CD14-positive monocyte (primary cell): ENCODE measurements at regions of chr4 and their contacts with region 1.

Region 1: DNA sequence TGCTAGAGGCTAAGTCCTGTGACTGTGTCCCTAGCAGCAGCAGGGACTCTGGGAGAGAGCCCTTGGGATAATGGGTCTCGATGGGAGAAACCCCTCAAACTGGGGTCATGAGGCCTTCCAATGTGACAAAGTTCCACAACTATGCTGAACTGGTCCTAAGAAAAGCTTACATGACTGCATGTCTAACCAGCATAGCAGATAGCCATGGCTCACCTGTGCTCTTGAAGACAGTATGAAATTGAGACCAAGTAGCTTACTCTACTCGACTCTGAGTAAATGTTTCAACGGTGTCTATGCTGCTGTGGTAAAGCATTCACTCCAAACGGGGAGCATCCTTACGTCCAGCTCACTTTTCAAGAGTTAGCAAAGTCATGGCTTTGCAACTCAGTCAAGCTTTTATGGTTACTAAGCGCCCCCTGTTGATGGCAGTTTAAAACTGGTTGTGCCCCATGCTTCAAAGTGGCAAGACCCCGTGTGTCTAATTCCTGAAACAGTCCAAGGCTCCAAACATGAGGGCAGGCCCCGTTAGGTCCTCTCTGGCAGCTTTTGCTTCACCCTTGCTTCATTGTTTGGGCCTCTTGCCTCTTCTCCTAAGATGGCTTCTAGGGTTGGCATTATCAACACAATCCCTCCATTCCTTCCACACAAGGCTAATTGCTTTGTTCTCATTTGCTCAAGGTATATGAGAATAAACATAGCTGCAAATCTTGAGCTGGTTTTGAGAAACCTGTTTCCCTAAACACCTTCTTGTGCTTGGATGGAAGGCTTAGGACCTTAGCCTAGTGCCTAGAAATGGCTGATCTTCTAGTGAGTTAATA is 46.6 kb downstream of the CCNG2 start:
- DNase-seq: peak; percentile 35 to 73 (median 70)
- H3K4me3 ChIP-seq: no peak overlapping the region
- H3K4me3 Mint-ChIP-seq: no peak overlapping the region
- H3K27ac ChIP-seq: no peak overlapping the region
- H3K27ac Mint-ChIP-seq: no peak overlapping the region
- H3K4me1 ChIP-seq: no peaks in the 10 kb centered on the region
- H3K4me1 Mint-ChIP-seq: peaks cover 2% of the 10 kb centered on the region
- H3K27me3 ChIP-seq: no peaks in the 10 kb centered on the region
- H3K27me3 Mint-ChIP-seq: peaks cover 0 to 2% (median 0%) of the 10 kb centered on the region in 3 donors
- CTCF ChIP-seq: peak; percentile 84

Region 2: GRCh38 chr4:77044461-77045150 is 159.0 kb before region 1 on chr4:
- intact Hi-C with region 1: loop called in 1 of 2 experiments (anchors 5 kb)
- DNase-seq: peak in 1 of 3 donors; percentile 5
- H3K4me3 ChIP-seq: no peak overlapping the region
- H3K4me3 Mint-ChIP-seq: no peak overlapping the region
- H3K27ac ChIP-seq: peak overlapping the region in 1 of 2 donors; percentile 22
- H3K27ac Mint-ChIP-seq: peak overlapping the region in 3 of 7 donors; percentile 6 to 68 (median 33)
- H3K4me1 ChIP-seq: peaks cover 18 to 21% of the 10 kb centered on the region in 2 donors
- H3K4me1 Mint-ChIP-seq: peaks cover 19% of the 10 kb centered on the region
- H3K27me3 ChIP-seq: no peaks in the 10 kb centered on the region
- H3K27me3 Mint-ChIP-seq: peaks cover 0 to 2% (median 0%) of the 10 kb centered on the region in 3 donors
- CTCF ChIP-seq: peak; percentile 66

Region 3: GRCh38 chr4:77052352-77052751 is 151.2 kb before region 1 on chr4:
- intact Hi-C with region 1: loop called (anchors 5 kb)
- DNase-seq: peak; percentile 30 to 45 (median 34)
- H3K4me3 ChIP-seq: no peak overlapping the region
- H3K4me3 Mint-ChIP-seq: no peak overlapping the region
- H3K27ac ChIP-seq: peak overlapping the region in 1 of 2 donors; percentile 17
- H3K27ac Mint-ChIP-seq: peak overlapping the region in 3 of 7 donors; percentile 26 to 50 (median 46)
- H3K4me1 ChIP-seq: no peaks in the 10 kb centered on the region
- H3K4me1 Mint-ChIP-seq: no peaks in the 10 kb centered on the region
- H3K27me3 ChIP-seq: no peaks in the 10 kb centered on the region
- H3K27me3 Mint-ChIP-seq: peaks cover 0 to 2% (median 0%) of the 10 kb centered on the region in 3 donors
- CTCF ChIP-seq: peak; percentile 63

Region 4: GRCh38 chr4:77095101-77095821 is 108.3 kb before region 1 on chr4:
- intact Hi-C with region 1: loop called (anchors 5 kb)
- DNase-seq: peak; percentile 56 to 80 (median 72)
- H3K4me3 ChIP-seq: no peak overlapping the region
- H3K4me3 Mint-ChIP-seq: no peak overlapping the region
- H3K27ac ChIP-seq: no peak overlapping the region
- H3K27ac Mint-ChIP-seq: no peak overlapping the region
- H3K4me1 ChIP-seq: peaks cover 16 to 20% of the 10 kb centered on the region in 2 donors
- H3K4me1 Mint-ChIP-seq: peaks cover 33% of the 10 kb centered on the region
- H3K27me3 ChIP-seq: no peaks in the 10 kb centered on the region
- H3K27me3 Mint-ChIP-seq: peaks cover 0 to 5% (median 0%) of the 10 kb centered on the region in 3 donors
- CTCF ChIP-seq: peak; percentile 95

Region 5: DNA sequence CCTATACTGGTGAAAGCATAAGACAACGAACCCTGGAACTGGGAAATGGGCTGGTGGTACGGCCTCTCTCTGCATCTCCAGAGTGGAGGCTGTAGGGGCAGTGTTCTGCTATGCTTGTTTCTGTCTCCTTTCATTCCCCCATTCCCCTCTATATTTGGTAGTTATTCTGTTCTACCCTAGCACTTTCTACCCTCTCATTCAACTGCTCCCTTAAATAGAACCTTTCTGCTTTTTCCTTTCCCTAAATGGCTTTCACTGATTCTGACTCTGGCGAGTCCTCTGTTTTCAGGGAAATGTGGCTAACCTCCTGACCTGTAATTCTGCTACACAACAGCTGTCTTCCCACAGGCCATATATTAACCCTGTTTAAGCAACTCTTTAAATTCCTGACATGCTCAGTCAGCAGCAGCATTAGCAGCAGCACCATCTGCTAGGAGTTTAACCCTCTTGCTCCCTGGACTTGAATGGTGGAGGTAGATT is 496.2 kb after region 1 on chr4:
- intact Hi-C with region 1: no loop called
- DNase-seq: no peak
- H3K4me3 ChIP-seq: no peak overlapping the region
- H3K4me3 Mint-ChIP-seq: peak overlapping the region in 1 of 2 donors; percentile 17
- H3K27ac ChIP-seq: no peak overlapping the region
- H3K27ac Mint-ChIP-seq: no peak overlapping the region
- H3K4me1 ChIP-seq: no peaks in the 10 kb centered on the region
- H3K4me1 Mint-ChIP-seq: no peaks in the 10 kb centered on the region
- H3K27me3 ChIP-seq: no peaks in the 10 kb centered on the region
- H3K27me3 Mint-ChIP-seq: peaks cover 0 to 2% (median 2%) of the 10 kb centered on the region in 3 donors
- CTCF ChIP-seq: no peak